ENCODE measurements at regions of chr3 and their contacts with region 1.

Region 1: GRCh38 chr3:169744366-169745054 is 20.4 kb downstream of the TERC start:
- DNase-seq: no peak
- H3K4me3 ChIP-seq: no peak overlapping the region
- H3K27ac ChIP-seq: no peak overlapping the region
- H3K4me1 ChIP-seq: no peaks in the 10 kb centered on the region
- H3K27me3 ChIP-seq: no peaks in the 10 kb centered on the region
- CTCF ChIP-seq: peak in 2 of 3 experiments; percentile 29 to 63

Region 2: DNA sequence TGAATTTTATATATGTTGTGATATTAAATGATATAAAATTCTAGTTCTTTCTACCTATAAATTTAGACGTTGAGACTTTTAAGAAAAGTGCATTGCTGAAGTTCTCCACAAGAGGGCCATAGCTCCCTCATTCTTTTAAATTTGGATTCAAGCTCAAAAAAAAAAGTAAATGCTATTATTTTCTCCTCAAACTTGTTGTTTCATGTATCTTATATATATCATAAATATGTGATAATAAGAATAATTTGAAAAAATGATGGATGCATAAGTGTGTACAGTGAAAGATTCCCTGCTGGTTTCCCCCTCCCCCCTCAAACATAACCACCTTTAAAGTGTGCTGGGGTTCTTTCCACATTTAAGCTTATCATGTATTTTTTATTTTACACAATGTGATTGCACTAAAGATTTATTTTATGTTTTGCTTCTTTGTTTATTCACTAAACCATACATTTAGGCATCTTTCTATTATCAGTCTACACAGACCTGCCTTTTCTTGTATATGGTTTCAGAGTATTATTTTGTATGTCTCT is 879.4 kb before region 1 on chr3:
- intact Hi-C with region 1: loop called (anchors 2 kb)
- DNase-seq: no peak
- H3K4me3 ChIP-seq: peak overlapping the region; percentile 21 to 23
- H3K27ac ChIP-seq: no peak overlapping the region
- H3K4me1 ChIP-seq: no peaks in the 10 kb centered on the region
- H3K27me3 ChIP-seq: no peaks in the 10 kb centered on the region
- CTCF ChIP-seq: peak in 2 of 3 experiments; percentile 60 to 69

Region 3: DNA sequence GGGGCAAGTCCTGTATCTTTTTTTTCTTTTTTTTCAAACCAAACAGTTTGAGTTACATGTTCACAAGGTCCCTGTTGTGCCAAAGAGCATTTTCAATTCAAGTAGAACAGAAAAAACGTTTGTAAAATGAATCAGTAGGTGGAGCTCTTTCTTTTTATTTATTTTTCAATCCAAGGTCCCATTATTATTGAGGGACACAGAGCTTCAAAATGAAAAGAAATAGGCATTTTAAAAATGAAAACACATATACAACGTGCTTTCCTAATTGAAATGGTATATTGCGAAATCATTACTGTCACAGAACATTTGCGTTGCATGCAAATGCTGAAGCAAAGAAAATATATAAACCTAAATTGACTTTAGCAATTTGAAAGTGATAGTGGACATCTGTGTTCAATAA is 792.0 kb before region 1 on chr3:
- intact Hi-C with region 1: loop called (anchors 5 kb)
- DNase-seq: no peak
- H3K4me3 ChIP-seq: peak overlapping the region in 1 of 2 donors; percentile 47
- H3K27ac ChIP-seq: no peak overlapping the region
- H3K4me1 ChIP-seq: no peaks in the 10 kb centered on the region
- H3K27me3 ChIP-seq: no peaks in the 10 kb centered on the region
- CTCF ChIP-seq: peak in 2 of 3 experiments; percentile 33 to 37

Region 4: DNA sequence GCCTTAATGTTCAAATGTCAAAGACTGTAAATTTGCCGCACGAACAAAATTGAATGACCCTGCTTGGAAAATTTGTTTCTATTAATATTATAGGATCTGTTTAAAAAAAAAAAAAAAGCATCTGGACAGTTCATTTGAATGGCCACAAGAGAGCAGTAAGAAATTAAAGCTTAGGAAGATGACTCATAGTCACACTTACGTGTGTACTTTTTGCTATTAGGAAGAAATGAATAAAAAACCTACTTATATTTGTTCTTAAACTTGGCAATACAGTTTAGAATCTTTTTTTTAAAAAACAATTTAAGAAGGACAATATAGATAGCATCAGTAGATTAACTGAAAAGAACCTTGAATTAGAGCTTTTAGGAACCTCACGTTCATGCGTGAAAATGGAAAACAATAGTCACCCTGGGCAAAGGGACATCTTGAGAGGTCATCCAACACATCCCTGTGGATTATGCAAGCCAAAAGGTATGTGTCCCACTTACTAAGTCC is 702.8 kb before region 1 on chr3:
- intact Hi-C with region 1: loop called (anchors 10 kb)
- DNase-seq: no peak
- H3K4me3 ChIP-seq: peak overlapping the region in 1 of 2 donors; percentile 11
- H3K27ac ChIP-seq: no peak overlapping the region
- H3K4me1 ChIP-seq: peaks cover 0 to 2% of the 10 kb centered on the region in 2 donors
- H3K27me3 ChIP-seq: no peaks in the 10 kb centered on the region
- CTCF ChIP-seq: peak in 2 of 3 experiments; percentile 62 to 68

Region 5: DNA sequence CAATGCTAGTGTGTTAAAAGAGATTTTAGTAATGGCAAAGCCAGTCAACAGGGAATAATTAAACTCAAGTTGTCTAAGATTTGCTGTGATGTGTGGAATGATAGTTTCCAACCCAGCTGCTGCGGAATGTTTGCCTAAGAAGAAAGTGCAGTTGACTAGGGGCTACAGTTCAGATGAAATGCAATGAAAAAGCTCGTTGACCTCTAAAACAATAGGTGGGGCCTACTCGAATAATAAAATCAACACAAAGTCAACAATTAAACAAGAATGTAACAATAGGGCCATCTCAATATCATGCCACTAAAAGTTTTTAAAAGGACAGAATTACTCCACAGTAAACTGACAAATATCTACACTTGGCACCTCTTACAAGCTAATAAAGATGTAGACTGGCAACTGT is 565.2 kb before region 1 on chr3:
- intact Hi-C with region 1: no loop called
- DNase-seq: no peak
- H3K4me3 ChIP-seq: no peak overlapping the region
- H3K27ac ChIP-seq: no peak overlapping the region
- H3K4me1 ChIP-seq: peaks cover 0 to 2% of the 10 kb centered on the region in 2 donors
- H3K27me3 ChIP-seq: no peaks in the 10 kb centered on the region
- CTCF ChIP-seq: no peak

Region 6: DNA sequence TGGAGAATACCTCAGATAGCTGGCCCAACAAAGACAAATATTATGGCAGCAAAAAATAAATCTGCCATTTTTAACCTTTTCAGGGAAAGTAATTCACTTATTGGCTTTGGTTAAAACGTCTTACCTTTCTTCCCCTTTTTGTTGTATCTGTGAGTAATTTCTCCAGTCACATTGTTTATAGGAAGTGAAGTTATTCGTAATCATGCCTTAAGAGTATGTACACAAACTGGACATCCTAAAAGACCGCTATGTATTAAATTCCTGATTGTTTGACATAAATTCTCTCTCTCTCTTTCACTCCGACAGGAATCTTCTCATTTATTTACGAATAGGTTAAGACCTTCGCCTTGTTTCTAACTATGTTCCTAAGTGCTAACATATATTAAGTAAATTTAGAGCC is 555.0 kb before region 1 on chr3:
- intact Hi-C with region 1: no loop called
- DNase-seq: no peak
- H3K4me3 ChIP-seq: no peak overlapping the region
- H3K27ac ChIP-seq: no peak overlapping the region
- H3K4me1 ChIP-seq: no peaks in the 10 kb centered on the region
- H3K27me3 ChIP-seq: no peaks in the 10 kb centered on the region
- CTCF ChIP-seq: no peak

Region 7: DNA sequence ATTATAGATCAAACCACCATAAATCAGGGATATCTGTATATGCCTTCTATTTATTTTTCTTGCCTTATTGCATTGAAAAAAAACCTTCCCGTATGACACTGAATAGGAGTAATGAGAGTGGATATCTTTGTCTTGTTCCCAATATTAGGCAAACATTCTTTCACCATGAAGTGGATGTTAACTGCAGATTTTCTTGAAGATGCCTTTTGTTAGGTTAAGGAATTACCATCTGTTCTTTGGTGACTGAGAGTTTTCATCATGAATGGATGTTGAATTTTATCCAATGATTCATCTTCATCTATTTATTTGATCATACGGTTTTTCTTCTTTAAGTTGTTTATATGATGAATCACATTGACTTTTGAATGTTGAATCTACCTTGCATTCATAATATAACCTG is 33.9 kb before region 1 on chr3:
- intact Hi-C with region 1: no loop called
- DNase-seq: no peak
- H3K4me3 ChIP-seq: no peak overlapping the region
- H3K27ac ChIP-seq: no peak overlapping the region
- H3K4me1 ChIP-seq: no peaks in the 10 kb centered on the region
- H3K27me3 ChIP-seq: no peaks in the 10 kb centered on the region
- CTCF ChIP-seq: no peak

Region 8: GRCh38 chr3:169764452-169765274 is 20.2 kb after region 1 on chr3 and contains the start of gene TERC:
- intact Hi-C with region 1: no loop called
- DNase-seq: peak; percentile 77 to 98
- H3K4me3 ChIP-seq: peak within 1 kb of the TSS; percentile 75 to 83
- H3K27ac ChIP-seq: peak within 1 kb of the TSS; percentile 96 to 97
- H3K4me1 ChIP-seq: peaks cover 3 to 8% of the 10 kb centered on the region in 2 donors
- H3K27me3 ChIP-seq: no peaks in the 10 kb centered on the region
- CTCF ChIP-seq: no peak
- total RNA-seq, gene TERC: 260 TPM

Measured in ascending aorta (tissue), 2 donors.